GM12878 (cell line): ENCODE measurements at regions of chr2 and their contacts with region 1.

Region 1: DNA sequence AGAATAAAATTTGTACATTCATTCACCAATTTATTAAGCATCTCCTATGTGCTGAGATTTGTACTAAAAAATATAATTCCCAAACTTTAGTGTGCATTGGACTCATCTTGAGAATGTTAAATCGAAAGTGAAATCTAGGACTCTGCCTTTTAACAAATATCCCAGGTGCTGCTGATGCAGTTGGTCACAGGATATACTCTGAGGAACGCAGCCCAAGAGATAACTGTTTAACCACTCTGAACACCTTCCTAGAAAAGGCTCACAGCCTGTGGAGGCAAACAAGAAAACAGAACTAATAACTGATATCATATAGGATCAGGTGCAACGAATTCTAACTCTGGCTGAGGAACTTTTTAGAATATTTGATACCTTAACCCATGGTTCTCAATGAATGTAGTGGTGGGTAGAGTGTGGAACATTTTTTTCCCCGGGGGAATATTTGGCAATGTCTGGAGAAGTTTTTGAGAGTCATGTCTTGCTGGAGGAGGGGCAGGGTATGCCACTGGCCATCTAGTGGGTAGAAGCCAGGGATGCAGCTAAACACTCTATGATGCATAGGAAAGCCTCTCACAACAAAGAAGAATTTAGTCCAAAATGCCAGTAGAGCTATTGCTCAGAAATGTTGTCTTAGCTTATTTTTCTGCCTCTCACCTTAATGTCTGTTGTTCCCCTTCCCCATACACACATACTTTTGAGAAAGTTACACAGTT is 96.5 kb downstream of the EHBP1 start:
- DNase-seq: no peak
- ATAC-seq: peak; percentile 78
- H3K4me3 ChIP-seq: no peak overlapping the region
- H3K27ac ChIP-seq: peak overlapping the region; percentile 33; the same call in 1 of the 2 replicates
- H3K4me1 ChIP-seq: no peaks in the 10 kb centered on the region; the same call in 1 of the 2 replicates
- H3K27me3 ChIP-seq: no peaks in the 10 kb centered on the region
- CTCF ChIP-seq: peak in 2 of 3 experiments; percentile 15 to 24; a peak in 1 of 6 replicates
- EP300 ChIP-seq: no peak
- POLR2A ChIP-seq: no peak
- RAD21 ChIP-seq: no peak

Region 2: GRCh38 chr2:62208759-62209114 is 593.2 kb before region 1 on chr2:
- CTCF ChIA-PET with region 1: no interaction called
- POLR2A ChIA-PET with region 1: no interaction called
- RAD21 ChIA-PET with region 1: no interaction called
- SMC1A ChIA-PET with region 1: no interaction called
- in situ Hi-C with region 1: no loop called
- intact Hi-C with region 1: no loop called
- DNase-seq: no peak
- ATAC-seq: peak; percentile 40
- H3K4me3 ChIP-seq: peak overlapping the region; percentile 31; the same call in 1 of the 2 replicates
- H3K27ac ChIP-seq: 0 out of 2 replicates have a peak overlapping the region, but pooled peaks have one; percentile 2
- H3K4me1 ChIP-seq: peaks cover 12% of the 10 kb centered on the region; the same call in 1 of the 2 replicates
- H3K27me3 ChIP-seq: no peaks in the 10 kb centered on the region
- CTCF ChIP-seq: no peak
- EP300 ChIP-seq: no peak
- POLR2A ChIP-seq: peak; percentile 23; the same call in 1 of the 2 replicates
- RAD21 ChIP-seq: no peak

Region 3: DNA sequence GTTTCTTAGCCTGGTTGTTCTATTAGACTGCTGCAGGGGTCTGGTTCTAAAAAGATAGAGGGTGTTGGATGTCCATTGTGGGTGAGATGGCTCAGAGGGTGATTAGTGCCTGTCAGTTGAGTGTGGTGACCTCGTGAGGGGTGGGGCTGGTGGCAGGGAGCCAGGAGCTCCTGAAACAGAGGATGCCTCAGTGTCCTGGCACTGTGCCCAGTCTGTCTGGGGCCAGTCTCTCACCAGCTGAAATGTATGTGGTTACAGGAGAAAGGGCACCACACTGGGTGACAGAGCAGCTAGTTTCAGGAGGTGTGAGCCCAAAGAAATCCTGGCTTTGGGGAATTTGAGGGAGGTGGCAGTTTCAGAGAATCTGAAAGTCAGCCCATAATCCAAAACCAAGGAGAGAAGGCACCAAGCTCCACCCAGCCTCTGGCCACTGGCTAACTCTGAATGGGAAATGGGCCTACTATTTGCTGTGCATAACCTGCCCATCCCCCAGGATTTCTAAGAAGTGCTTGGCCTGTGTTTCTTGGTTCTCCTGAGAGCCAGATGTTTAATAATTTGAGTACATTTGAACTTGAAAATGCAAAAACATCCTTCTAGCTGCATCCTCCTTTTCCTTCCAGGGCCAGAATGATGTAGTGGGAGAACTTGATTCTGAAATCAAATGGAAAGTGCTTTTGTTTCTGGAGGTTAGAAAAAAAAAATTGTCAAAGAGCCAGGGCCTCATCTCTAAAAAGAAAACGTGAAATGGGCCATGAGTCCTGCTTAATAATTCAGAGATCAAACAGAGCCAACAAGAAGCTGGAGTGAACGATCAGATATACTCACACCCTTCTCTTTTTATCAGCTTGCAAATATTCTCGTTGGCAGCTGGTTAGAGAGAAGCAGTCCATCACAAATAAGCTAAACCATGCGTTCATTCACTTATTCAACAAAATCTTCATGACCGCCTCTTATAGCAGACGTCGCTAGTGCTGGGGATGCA is 513.8 kb before region 1 on chr2:
- CTCF ChIA-PET with region 1: no interaction called
- POLR2A ChIA-PET with region 1: no interaction called
- RAD21 ChIA-PET with region 1: no interaction called
- SMC1A ChIA-PET with region 1: no interaction called
- in situ Hi-C with region 1: no loop called
- intact Hi-C with region 1: no loop called
- DNase-seq: peak; percentile 94
- ATAC-seq: peak; percentile 91
- H3K4me3 ChIP-seq: no peak overlapping the region
- H3K27ac ChIP-seq: peak overlapping the region; percentile 3; the same call in 1 of the 2 replicates
- H3K4me1 ChIP-seq: peaks cover 38% of the 10 kb centered on the region
- H3K27me3 ChIP-seq: no peaks in the 10 kb centered on the region
- CTCF ChIP-seq: no peak
- EP300 ChIP-seq: 0 out of 4 replicates have a peak, but pooled peaks of 1 of the 2 experiments have one; percentile 34
- POLR2A ChIP-seq: no peak
- RAD21 ChIP-seq: no peak

Region 4: GRCh38 chr2:62812921-62813825 is 11.2 kb after region 1 on chr2:
- CTCF ChIA-PET with region 1: interaction called, 5 read pairs
- POLR2A ChIA-PET with region 1: interaction called, 3 read pairs
- RAD21 ChIA-PET with region 1: interaction called, 4 read pairs
- SMC1A ChIA-PET with region 1: interaction called, 10 read pairs
- in situ Hi-C with region 1: no loop called
- intact Hi-C with region 1: no loop called
- DNase-seq: no peak
- ATAC-seq: no peak
- H3K4me3 ChIP-seq: no peak overlapping the region
- H3K27ac ChIP-seq: no peak overlapping the region
- H3K4me1 ChIP-seq: peaks cover 3% of the 10 kb centered on the region; the same call in 1 of the 2 replicates
- H3K27me3 ChIP-seq: no peaks in the 10 kb centered on the region
- CTCF ChIP-seq: no peak
- EP300 ChIP-seq: no peak
- POLR2A ChIP-seq: no peak
- RAD21 ChIP-seq: no peak

Region 5: GRCh38 chr2:62996534-62997186 is 194.7 kb after region 1 on chr2:
- CTCF ChIA-PET with region 1: no interaction called
- POLR2A ChIA-PET with region 1: no interaction called
- RAD21 ChIA-PET with region 1: no interaction called
- SMC1A ChIA-PET with region 1: no interaction called
- in situ Hi-C with region 1: no loop called
- intact Hi-C with region 1: no loop called
- DNase-seq: no peak
- ATAC-seq: no peak
- H3K4me3 ChIP-seq: no peak overlapping the region
- H3K27ac ChIP-seq: no peak overlapping the region
- H3K4me1 ChIP-seq: no peaks in the 10 kb centered on the region
- H3K27me3 ChIP-seq: no peaks in the 10 kb centered on the region
- CTCF ChIP-seq: no peak
- EP300 ChIP-seq: no peak
- POLR2A ChIP-seq: no peak
- RAD21 ChIP-seq: no peak